ENCODE measurements at regions of chr12 and their contacts with region 1.

Region 1: DNA sequence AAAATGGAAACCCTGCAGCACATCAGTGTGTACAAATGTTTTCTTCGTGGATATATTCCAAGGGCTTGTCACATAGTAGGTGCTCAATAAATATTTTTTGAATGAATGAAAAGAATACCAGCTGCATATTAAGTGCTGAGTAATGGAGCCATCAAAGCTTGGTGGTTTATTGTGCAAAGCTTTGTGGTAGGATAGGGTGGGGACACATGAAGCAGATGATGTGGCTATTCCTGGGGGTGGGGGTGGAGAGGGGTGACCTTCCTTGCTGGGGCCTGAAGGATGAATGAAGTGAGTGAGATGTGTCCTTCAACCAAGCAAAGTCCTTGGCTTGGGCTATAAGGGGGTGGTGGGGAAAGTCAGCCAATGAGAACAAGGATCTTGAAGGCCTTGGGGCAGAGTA is 4.3 kb upstream of the KRT81 start:
- DNase-seq: no peak
- H3K4me3 ChIP-seq: no peak overlapping the region
- CTCF ChIP-seq: no peak

Region 2: DNA sequence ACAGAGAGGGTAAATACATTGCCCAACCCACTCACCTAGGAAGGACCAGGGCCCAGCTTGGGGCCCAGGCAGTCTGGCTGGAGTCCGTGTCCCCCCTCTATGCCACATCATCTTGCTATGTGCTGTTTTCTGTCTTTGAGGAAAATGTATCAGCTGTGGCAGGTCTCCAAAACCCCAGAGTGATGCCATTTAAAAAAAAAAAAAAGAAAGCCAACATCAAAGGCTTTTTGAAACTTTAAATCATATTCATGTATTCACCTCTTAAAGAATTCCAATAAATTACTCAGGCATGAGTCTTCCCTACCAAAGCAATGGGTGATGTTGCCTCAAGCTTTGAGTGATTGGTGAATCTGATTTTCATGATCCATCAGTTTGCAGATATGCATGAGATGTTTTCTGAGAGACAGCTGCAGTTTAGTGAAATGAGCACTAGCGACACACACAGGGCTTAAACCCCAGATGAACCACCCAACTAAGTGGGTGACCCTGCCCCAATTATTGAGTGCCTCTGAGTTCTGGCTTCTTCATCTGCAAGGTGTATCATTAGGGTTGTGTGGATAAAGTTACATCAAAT is 10.4 kb before region 1 on chr12:
- CTCF ChIA-PET with region 1: interaction called, 30 read pairs
- POLR2A ChIA-PET with region 1: no interaction called
- DNase-seq: no peak
- H3K4me3 ChIP-seq: no peak overlapping the region
- CTCF ChIP-seq: no peak

Region 3: DNA sequence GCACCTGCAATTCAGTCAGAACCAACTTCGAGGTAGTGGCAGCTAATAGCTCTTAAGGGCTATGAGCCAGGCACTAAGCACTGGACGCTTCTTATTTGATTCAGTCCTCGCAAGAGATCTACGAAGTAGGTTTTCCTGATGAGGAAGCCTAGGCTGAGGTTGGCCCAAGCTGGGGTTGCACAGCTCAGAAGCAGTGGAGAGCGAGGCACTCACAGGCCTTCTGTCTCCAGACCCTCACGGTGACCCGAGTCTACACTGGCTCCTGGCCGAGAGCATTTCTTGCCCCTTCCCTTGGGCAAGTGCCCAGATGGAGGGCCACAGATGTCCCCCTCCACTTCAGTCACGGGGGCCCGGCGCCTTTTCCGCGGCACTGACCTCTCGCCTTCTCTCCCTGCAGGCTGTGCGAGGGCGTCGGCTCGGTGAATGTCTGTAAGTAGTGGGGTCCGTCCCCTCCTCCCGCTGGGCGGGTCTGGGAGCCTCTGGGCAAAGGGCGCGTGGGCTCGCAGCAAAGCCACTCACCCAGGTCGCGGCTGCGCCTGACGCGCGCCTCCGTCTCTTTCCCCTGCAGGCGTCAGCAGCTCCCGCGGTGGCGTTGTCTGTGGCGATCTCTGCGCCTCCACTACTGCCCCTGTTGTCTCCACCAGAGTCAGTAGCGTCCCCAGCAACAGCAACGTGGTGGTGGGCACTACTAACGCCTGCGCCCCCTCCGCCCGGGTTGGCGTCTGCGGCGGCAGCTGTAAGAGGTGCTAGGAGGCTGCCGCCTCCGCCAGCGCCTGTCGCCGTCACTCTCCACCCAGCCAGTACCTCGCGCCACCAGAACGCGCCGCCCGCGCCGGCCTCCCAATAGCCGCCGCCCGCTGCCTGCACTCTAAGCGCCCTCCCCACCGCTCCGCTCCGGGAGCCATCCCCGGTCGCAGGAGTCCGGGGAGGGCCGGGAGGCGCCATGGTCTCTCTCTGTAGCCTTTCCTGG is 12.5 kb after region 1 on chr12:
- CTCF ChIA-PET with region 1: interaction called, 14 read pairs
- POLR2A ChIA-PET with region 1: no interaction called
- DNase-seq: no peak
- H3K4me3 ChIP-seq: peak overlapping the region; percentile 53
- CTCF ChIP-seq: no peak

Measured in AG04449 (cell line).